ENCODE measurements at regions of chr6 and their contacts with region 1.

Region 1: DNA sequence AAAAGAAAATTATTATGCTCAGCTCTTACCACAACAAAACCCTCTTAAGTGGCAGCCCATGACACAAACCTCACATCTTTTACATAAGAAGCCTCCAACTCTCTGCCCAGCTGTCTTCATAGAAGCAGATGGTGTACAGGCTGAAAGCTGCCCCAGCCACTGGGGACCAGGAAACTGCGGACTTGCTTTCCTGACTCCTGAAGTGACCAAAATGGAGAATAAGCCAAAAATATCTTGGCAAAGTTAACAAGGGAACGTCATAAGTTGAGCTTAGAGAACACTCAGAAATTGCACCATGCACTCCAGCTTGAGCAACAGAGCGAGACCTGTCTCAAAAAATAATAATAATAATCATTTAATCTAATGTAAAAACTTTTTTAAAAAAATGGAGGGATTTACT is 160.3 kb upstream of the CDYL start:
- DNase-seq: no peak
- H3K4me3 ChIP-seq: no peak overlapping the region
- H3K27ac ChIP-seq: no peak overlapping the region
- H3K4me1 ChIP-seq: peaks cover 0 to 10% (median 4%) of the 10 kb centered on the region in 4 donors
- H3K27me3 ChIP-seq: no peaks in the 10 kb centered on the region
- CTCF ChIP-seq: no peak
- EP300 ChIP-seq: no peak
- POLR2A ChIP-seq: no peak

Region 2: GRCh38 chr6:4543596-4543995 is 72.3 kb before region 1 on chr6:
- in situ Hi-C with region 1: no loop called
- intact Hi-C with region 1: loop called (anchors 5 kb)
- DNase-seq: no peak
- H3K4me3 ChIP-seq: no peak overlapping the region
- H3K27ac ChIP-seq: no peak overlapping the region
- H3K4me1 ChIP-seq: no peaks in the 10 kb centered on the region
- H3K27me3 ChIP-seq: no peaks in the 10 kb centered on the region
- CTCF ChIP-seq: no peak
- EP300 ChIP-seq: no peak
- POLR2A ChIP-seq: no peak

Measured in transverse colon (tissue), 4 donors.